ENCODE measurements at regions of chr1 and their contacts with region 1.

Region 1: GRCh38 chr1:179365320-179366092 is at the start of gene AXDND1:
- DNase-seq: peak; percentile 80 to 96 (median 90)
- ATAC-seq: peak; percentile 92
- H3K4me3 ChIP-seq: peak within 1 kb of the TSS; percentile 72 to 73
- H3K4me3 Mint-ChIP-seq: peak within 1 kb of the TSS; percentile 99
- H3K27ac ChIP-seq: peak within 1 kb of the TSS; percentile 92 to 99
- H3K27ac Mint-ChIP-seq: peak within 1 kb of the TSS; percentile 100
- H3K4me1 ChIP-seq: peaks cover 6% of the 10 kb centered on the region
- H3K4me1 Mint-ChIP-seq: peaks cover 12% of the 10 kb centered on the region
- H3K27me3 ChIP-seq: no peaks in the 10 kb centered on the region
- H3K27me3 Mint-ChIP-seq: no peaks in the 10 kb centered on the region
- CTCF ChIP-seq: no peak
- total RNA-seq, gene AXDND1: 0.98 to 1.6 TPM

Region 2: GRCh38 chr1:178532392-178532791 is 833.1 kb before region 1 on chr1:
- CTCF ChIA-PET with region 1: interaction called, 4 read pairs
- POLR2A ChIA-PET with region 1: no interaction called
- intact Hi-C with region 1: loop called (anchors 1 to 5 kb)
- DNase-seq: peak; percentile 48 to 86 (median 72)
- ATAC-seq: peak; percentile 73
- H3K4me3 ChIP-seq: no peak overlapping the region
- H3K4me3 Mint-ChIP-seq: no peak overlapping the region
- H3K27ac ChIP-seq: no peak overlapping the region
- H3K27ac Mint-ChIP-seq: no peak overlapping the region
- H3K4me1 ChIP-seq: peaks cover 6% of the 10 kb centered on the region
- H3K4me1 Mint-ChIP-seq: peaks cover 4% of the 10 kb centered on the region
- H3K27me3 ChIP-seq: no peaks in the 10 kb centered on the region
- H3K27me3 Mint-ChIP-seq: peaks cover 2% of the 10 kb centered on the region
- CTCF ChIP-seq: peak; percentile 92

Region 3: GRCh38 chr1:178768423-178768822 is 597.1 kb before region 1 on chr1:
- CTCF ChIA-PET with region 1: interaction called, 3 read pairs
- POLR2A ChIA-PET with region 1: no interaction called
- intact Hi-C with region 1: loop called in 1 of 2 experiments (anchors 1 kb)
- DNase-seq: peak in 3 of 9 experiments; percentile 50 to 61 (median 51)
- ATAC-seq: peak; percentile 62
- H3K4me3 ChIP-seq: no peak overlapping the region
- H3K4me3 Mint-ChIP-seq: no peak overlapping the region
- H3K27ac ChIP-seq: no peak overlapping the region
- H3K27ac Mint-ChIP-seq: no peak overlapping the region
- H3K4me1 ChIP-seq: no peaks in the 10 kb centered on the region
- H3K4me1 Mint-ChIP-seq: peaks cover 4% of the 10 kb centered on the region
- H3K27me3 ChIP-seq: no peaks in the 10 kb centered on the region
- H3K27me3 Mint-ChIP-seq: no peaks in the 10 kb centered on the region
- CTCF ChIP-seq: peak; percentile 75

Region 4: DNA sequence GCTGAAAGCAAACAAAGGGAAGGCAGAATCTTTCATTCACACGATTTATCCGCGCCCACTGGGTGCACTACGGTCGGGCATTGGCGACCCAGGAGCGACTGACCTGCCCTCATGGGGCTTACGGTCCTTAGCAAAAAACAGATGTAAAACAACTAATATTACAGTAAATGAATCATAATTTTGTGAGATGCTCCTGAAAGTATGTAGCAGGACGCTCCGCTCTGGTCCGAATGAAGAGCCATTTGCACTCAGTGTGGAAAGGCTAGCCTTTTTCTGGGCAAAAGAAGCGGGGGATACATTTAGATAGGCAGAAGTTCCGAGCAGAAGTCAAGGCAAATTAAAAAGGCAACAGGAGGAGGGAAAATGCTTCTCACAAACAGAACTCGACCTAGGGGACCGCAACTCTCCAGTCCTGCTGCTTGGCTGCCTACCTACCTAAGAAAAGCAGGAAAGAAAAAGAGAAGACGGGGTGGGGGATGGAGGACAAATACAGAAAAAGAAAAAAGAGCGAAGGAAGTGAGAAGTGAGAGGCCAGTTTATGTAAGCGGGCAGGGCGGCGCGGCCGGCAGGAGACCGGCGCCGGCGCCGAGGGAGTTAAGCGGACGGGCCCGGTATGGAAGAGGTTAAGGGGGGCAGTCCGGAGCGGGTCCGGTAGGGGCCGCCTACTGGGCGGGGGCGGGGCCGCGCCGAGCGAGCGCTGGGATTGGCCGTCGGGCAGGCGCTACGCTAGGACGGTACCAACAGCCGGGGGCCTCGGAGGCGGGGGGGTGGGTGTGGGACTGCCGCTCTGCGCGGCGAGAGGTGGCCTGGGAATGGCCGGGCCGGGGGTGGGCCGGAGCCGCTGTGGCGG is 340.2 kb before region 1 on chr1 and contains the start of gene FAM20B:
- CTCF ChIA-PET with region 1: interaction called, 3 read pairs
- POLR2A ChIA-PET with region 1: no interaction called
- intact Hi-C with region 1: loop called (anchors 1 to 5 kb)
- DNase-seq: peak; percentile 82 to 94 (median 90)
- ATAC-seq: peak; percentile 85
- H3K4me3 ChIP-seq: peak within 1 kb of the TSS; percentile 70 to 81
- H3K4me3 Mint-ChIP-seq: peak within 1 kb of the TSS; percentile 87
- H3K27ac ChIP-seq: peak within 1 kb of the TSS; percentile 77 to 83
- H3K27ac Mint-ChIP-seq: peak within 1 kb of the TSS; percentile 88
- H3K4me1 ChIP-seq: peaks cover 25% of the 10 kb centered on the region
- H3K4me1 Mint-ChIP-seq: peaks cover 40% of the 10 kb centered on the region
- H3K27me3 ChIP-seq: no peaks in the 10 kb centered on the region
- H3K27me3 Mint-ChIP-seq: no peaks in the 10 kb centered on the region
- CTCF ChIP-seq: no peak
- total RNA-seq, gene FAM20B: 11.1 to 11.2 TPM

Region 5: DNA sequence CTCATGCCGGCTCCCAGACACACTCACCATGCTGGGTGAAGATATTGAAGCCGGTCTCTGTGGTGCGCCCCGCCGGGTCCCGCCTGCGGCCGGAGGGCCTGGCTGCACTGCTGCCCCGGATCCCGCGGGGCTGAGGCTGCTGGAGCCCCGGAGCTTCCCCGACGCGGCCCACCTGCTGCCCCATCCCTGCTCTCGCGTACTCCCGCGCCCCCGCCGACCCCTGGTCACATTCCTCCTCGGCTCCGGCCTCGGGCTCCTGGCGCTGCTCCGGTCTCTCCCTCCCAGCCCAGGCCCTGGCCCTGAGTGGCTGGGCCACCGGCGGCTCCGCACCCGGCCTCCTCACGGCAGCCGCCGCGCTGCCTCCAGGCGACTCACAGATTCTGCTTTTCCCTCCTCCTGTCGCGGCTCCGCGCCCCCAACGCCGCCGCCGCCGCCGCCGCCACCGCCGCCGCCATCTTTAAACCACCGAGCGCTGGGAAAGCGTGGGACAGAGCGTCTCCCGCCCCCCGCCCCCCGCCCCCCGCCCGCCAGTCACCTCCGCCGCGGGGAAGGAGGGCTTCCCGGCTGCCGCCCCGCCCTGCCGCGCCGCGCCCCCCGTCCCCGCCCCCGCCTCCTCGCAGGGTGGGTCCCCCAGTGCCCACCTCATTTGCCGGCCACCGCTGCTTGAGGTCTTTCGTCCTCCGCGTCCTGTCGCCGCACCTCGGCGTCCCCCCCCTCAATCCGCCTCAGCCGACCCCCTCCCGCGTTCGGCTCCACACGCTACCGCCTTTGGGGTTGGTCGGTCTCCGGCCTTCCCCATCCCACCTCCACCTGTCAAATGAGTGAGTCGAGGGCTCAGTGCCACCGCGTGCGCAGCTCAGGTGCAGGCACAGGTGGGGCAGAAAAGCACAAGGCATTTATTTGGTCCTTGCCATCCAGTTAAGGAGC is 136.0 kb before region 1 on chr1 and contains the start of gene ABL2:
- CTCF ChIA-PET with region 1: interaction called, 3 read pairs
- POLR2A ChIA-PET with region 1: interaction called, 3 read pairs
- intact Hi-C with region 1: loop called (anchors 1 to 5 kb)
- DNase-seq: peak; percentile 1 to 74 (median 59)
- ATAC-seq: peak; percentile 63
- H3K4me3 ChIP-seq: peak within 1 kb of the TSS; percentile 67
- H3K4me3 Mint-ChIP-seq: peak within 1 kb of the TSS; percentile 90
- H3K27ac ChIP-seq: peak within 1 kb of the TSS; percentile 51 to 53
- H3K27ac Mint-ChIP-seq: peak within 1 kb of the TSS; percentile 91
- H3K4me1 ChIP-seq: peaks cover 14% of the 10 kb centered on the region
- H3K4me1 Mint-ChIP-seq: peaks cover 32% of the 10 kb centered on the region
- H3K27me3 ChIP-seq: no peaks in the 10 kb centered on the region
- H3K27me3 Mint-ChIP-seq: no peaks in the 10 kb centered on the region
- CTCF ChIP-seq: no peak
- total RNA-seq, gene ABL2: 12.4 to 14.6 TPM

Region 6: GRCh38 chr1:179393721-179394120 is 28.2 kb after region 1 on chr1:
- CTCF ChIA-PET with region 1: no interaction called
- POLR2A ChIA-PET with region 1: no interaction called
- intact Hi-C with region 1: no loop called
- DNase-seq: no peak
- ATAC-seq: no peak
- H3K4me3 ChIP-seq: no peak overlapping the region
- H3K4me3 Mint-ChIP-seq: no peak overlapping the region
- H3K27ac ChIP-seq: no peak overlapping the region
- H3K27ac Mint-ChIP-seq: no peak overlapping the region
- H3K4me1 ChIP-seq: no peaks in the 10 kb centered on the region
- H3K4me1 Mint-ChIP-seq: no peaks in the 10 kb centered on the region
- H3K27me3 ChIP-seq: no peaks in the 10 kb centered on the region
- H3K27me3 Mint-ChIP-seq: peaks cover 11% of the 10 kb centered on the region
- CTCF ChIP-seq: no peak

Region 7: GRCh38 chr1:179809506-179810366 is 444.2 kb after region 1 on chr1:
- CTCF ChIA-PET with region 1: interaction called, 3 read pairs
- POLR2A ChIA-PET with region 1: no interaction called
- intact Hi-C with region 1: loop called (anchors 5 to 10 kb)
- DNase-seq: peak; percentile 37 to 87 (median 71)
- ATAC-seq: peak; percentile 84
- H3K4me3 ChIP-seq: no peak overlapping the region
- H3K4me3 Mint-ChIP-seq: peak overlapping the region; percentile 1
- H3K27ac ChIP-seq: no peak overlapping the region
- H3K27ac Mint-ChIP-seq: no peak overlapping the region
- H3K4me1 ChIP-seq: peaks cover 11% of the 10 kb centered on the region
- H3K4me1 Mint-ChIP-seq: peaks cover 12% of the 10 kb centered on the region
- H3K27me3 ChIP-seq: no peaks in the 10 kb centered on the region
- H3K27me3 Mint-ChIP-seq: peaks cover 5% of the 10 kb centered on the region
- CTCF ChIP-seq: peak; percentile 82

Region 8: DNA sequence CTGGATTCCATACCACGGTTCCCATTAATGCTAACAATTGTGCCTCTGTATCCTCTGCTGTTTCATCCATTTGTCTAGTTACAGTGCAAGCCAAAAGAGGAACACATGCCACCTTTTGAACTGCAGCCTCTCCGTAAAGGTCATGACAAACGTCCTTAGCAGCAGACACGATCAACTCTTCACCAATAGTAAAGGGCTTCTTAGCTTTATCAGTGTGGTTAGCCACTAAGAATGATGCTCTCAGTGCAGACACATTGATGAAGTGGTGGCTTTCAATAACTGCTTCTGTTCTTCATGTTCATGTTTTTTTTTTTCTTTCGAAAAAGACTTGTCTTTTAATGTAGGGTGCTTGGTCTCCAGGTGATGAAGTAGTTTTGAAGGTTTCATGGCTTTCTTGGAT is 1280.6 kb after region 1 on chr1:
- CTCF ChIA-PET with region 1: no interaction called
- POLR2A ChIA-PET with region 1: no interaction called
- intact Hi-C with region 1: no loop called
- DNase-seq: no peak
- ATAC-seq: no peak
- H3K4me3 ChIP-seq: no peak overlapping the region
- H3K4me3 Mint-ChIP-seq: no peak overlapping the region
- H3K27ac ChIP-seq: no peak overlapping the region
- H3K27ac Mint-ChIP-seq: no peak overlapping the region
- H3K4me1 ChIP-seq: no peaks in the 10 kb centered on the region
- H3K4me1 Mint-ChIP-seq: peaks cover 54% of the 10 kb centered on the region
- H3K27me3 ChIP-seq: no peaks in the 10 kb centered on the region
- H3K27me3 Mint-ChIP-seq: no peaks in the 10 kb centered on the region
- CTCF ChIP-seq: no peak

Measured in CD8-positive, alpha-beta T cell (primary cell).